ENCODE measurements at regions of chr5 and their contacts with region 1.

Region 1: GRCh38 chr5:107108111-107108510 is 562.6 kb downstream of the EFNA5 start:
- DNase-seq: no peak
- ATAC-seq: no peak
- H3K4me3 ChIP-seq: no peak overlapping the region
- H3K27ac ChIP-seq: no peak overlapping the region
- H3K4me1 ChIP-seq: no peaks in the 10 kb centered on the region
- H3K27me3 ChIP-seq: no peaks in the 10 kb centered on the region
- CTCF ChIP-seq: no peak

Region 2: GRCh38 chr5:106974272-106974671 is 133.8 kb before region 1 on chr5:
- intact Hi-C with region 1: no loop called
- DNase-seq: no peak
- ATAC-seq: no peak
- H3K4me3 ChIP-seq: no peak overlapping the region
- H3K27ac ChIP-seq: no peak overlapping the region
- H3K4me1 ChIP-seq: no peaks in the 10 kb centered on the region
- H3K27me3 ChIP-seq: no peaks in the 10 kb centered on the region
- CTCF ChIP-seq: no peak

Region 3: DNA sequence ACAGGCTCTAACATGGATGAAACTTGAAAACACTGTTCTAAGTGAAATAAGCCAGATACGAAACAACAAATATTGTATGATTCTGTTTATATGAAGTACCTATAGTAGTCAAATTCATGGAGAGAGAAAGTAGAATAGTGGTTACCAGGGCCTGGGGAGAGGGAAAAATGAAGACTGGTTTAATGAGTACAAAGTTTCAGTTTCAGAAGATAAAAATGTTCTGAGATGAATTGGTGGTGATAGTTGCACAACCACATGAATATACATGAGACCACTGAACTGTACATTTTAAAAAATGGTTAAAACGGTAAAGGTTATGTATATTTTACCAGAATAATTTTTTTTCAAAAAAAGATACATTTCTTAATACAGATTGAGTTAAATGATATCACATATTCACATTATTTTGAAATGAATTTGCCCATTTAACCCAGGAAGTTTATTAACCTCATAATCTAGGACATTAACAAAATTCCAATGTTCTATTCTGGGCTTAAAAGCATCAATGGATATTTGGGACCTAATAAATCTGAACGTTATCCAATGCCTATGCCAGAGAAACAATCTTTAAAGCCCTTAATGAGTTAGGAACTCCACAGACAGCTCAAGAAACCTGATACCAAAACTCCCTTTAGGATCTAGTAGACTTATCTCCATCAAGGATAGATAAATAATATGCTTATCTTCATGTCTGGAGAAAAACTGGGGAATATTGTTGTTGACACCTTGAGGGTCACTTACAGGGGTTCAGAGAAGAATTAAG is 41.3 kb after region 1 on chr5:
- intact Hi-C with region 1: no loop called
- DNase-seq: no peak
- ATAC-seq: no peak
- H3K4me3 ChIP-seq: no peak overlapping the region
- H3K27ac ChIP-seq: no peak overlapping the region
- H3K4me1 ChIP-seq: peaks cover 14% of the 10 kb centered on the region
- H3K27me3 ChIP-seq: no peaks in the 10 kb centered on the region
- CTCF ChIP-seq: no peak

Region 4: GRCh38 chr5:107248066-107248695 is 140.1 kb after region 1 on chr5:
- intact Hi-C with region 1: loop called (anchors 2 to 5 kb)
- DNase-seq: peak; percentile 40 to 74
- ATAC-seq: peak; percentile 67 to 93 (median 81)
- H3K4me3 ChIP-seq: no peak overlapping the region
- H3K27ac ChIP-seq: no peak overlapping the region
- H3K4me1 ChIP-seq: peaks cover 9% of the 10 kb centered on the region
- H3K27me3 ChIP-seq: no peaks in the 10 kb centered on the region
- CTCF ChIP-seq: peak; percentile 84

Region 5: DNA sequence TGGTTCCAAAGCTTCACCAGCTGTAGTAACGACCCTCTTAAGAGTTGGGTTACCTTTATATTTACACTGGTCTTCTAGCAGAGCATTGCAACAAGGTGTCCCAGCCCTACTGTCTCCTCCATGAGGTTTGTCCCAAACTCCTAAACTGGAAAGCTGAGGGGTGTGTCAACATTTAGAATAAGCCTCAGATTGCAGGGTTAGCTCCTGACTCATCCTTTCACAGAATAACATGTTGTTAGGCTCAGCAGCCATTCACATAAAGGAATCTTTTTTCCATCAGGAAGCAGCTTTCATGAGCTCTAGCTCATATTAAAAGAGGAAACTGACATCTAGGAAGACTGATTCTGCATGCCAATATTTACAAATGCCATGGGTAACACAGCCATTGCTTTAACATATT is 323.9 kb after region 1 on chr5:
- intact Hi-C with region 1: no loop called
- DNase-seq: no peak
- ATAC-seq: peak in 2 of 4 donors; percentile 53 to 65
- H3K4me3 ChIP-seq: no peak overlapping the region
- H3K27ac ChIP-seq: no peak overlapping the region
- H3K4me1 ChIP-seq: no peaks in the 10 kb centered on the region
- H3K27me3 ChIP-seq: no peaks in the 10 kb centered on the region
- CTCF ChIP-seq: no peak

Measured in psoas muscle (tissue), 8 donors.